Activated T-helper 2 cell treated with anti-CD3 and anti-CD28 coated beads, Interferon-gamma antibody, Interleukin-2, Interleukin-4, amounts not matched to agents 10 μg/mL and 5 μg/mL and 100 μg/mL, durations not matched to agents 14 hours and 24 hours and 36 hours (primary cell): ENCODE measurements at regions of chr5 and their contacts with region 1.

Region 1: GRCh38 chr5:67209142-67209771 is 12.7 kb upstream of the CD180 start:
- DNase-seq: peak; percentile 57
- H3K4me3 Mint-ChIP-seq: no peak overlapping the region
- H3K27ac Mint-ChIP-seq: peak overlapping the region; percentile 26
- H3K4me1 Mint-ChIP-seq: peaks cover 61% of the 10 kb centered on the region
- H3K27me3 Mint-ChIP-seq: no peaks in the 10 kb centered on the region

Region 2: GRCh38 chr5:66828548-66829357 is 380.5 kb before region 1 on chr5:
- intact Hi-C with region 1: loop called (anchors 5 kb)
- DNase-seq: peak; percentile 61
- H3K4me3 Mint-ChIP-seq: peak overlapping the region; percentile 88
- H3K27ac Mint-ChIP-seq: peak overlapping the region; percentile 86
- H3K4me1 Mint-ChIP-seq: peaks cover 41% of the 10 kb centered on the region
- H3K27me3 Mint-ChIP-seq: peaks cover 13% of the 10 kb centered on the region

Region 3: DNA sequence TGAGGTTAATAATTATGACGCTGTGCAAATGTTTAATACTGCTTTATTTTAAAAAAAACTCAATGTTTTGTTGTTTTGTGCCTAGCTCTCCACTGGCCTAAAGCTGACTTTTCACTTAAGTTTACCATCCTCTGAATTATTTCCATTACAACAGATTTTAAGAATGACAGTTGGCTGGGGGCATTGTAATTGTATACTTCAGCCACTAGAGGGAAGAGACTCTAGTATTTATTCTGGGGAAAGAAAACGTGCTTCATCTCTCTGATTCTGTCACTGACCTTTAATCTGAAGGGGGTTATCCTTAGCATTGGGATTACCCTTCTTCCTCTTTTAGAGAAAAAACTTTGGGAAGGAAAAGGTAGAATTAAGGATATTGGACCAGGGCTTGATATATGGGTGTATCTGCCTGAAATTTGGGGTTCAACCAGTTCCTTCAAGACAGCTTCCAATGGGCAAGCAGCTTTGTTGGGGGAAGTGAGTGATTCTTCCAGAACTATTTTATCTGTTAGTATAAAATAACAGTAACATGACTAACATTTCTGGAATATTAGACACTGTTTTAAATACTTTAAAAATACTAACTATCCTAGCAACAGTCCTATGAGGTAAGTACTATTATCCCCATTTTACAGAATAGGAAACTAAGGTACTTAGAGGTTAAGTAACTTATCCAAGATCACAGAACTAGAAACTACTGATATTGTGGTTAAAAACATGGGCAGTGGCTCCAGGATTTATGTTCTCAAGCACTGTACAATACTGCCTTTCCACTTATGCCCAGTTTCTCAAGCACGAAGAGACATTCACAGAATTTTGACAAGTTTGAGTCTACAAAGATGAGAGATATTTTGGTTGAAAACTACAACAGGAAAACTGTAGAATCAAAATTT is 221.1 kb before region 1 on chr5:
- intact Hi-C with region 1: loop called (anchors 2 kb)
- DNase-seq: no peak
- H3K4me3 Mint-ChIP-seq: no peak overlapping the region
- H3K27ac Mint-ChIP-seq: no peak overlapping the region
- H3K4me1 Mint-ChIP-seq: peaks cover 8% of the 10 kb centered on the region
- H3K27me3 Mint-ChIP-seq: peaks cover 19% of the 10 kb centered on the region

Region 4: DNA sequence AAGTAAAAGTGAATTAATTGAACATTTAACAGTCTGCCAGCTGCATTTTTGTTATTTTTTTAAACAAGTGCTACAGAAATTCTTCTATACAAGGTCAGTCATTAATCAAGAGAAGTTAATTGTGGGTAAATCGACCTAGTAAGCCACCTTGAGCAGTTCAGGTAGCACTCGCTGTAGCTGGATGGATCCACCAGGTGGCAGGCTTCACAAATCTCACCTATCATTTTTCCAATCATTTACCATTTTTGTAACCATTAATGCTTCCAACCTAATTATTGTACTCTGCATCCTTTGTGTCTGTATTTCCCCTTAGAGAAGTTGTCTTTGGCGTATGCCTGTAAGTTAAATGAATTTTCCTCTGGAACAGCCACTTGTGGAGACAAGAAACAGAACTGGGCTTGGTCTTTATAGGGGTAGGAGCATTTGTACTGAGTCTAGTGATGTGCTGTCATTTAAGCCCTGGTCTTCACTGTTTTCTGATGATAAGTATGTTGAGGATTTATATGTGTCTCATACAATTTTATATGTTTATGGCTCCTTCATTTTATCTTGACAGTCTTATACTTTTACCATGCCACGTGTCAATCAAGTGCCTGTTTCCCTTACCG is 52.2 kb before region 1 on chr5:
- intact Hi-C with region 1: loop called (anchors 1 kb)
- DNase-seq: no peak
- H3K4me3 Mint-ChIP-seq: no peak overlapping the region
- H3K27ac Mint-ChIP-seq: peak overlapping the region; percentile 40
- H3K4me1 Mint-ChIP-seq: peaks cover 38% of the 10 kb centered on the region
- H3K27me3 Mint-ChIP-seq: no peaks in the 10 kb centered on the region

Region 5: GRCh38 chr5:68252673-68253623 is 1043.7 kb after region 1 on chr5:
- intact Hi-C with region 1: loop called (anchors 10 kb)
- DNase-seq: no peak
- H3K4me3 Mint-ChIP-seq: no peak overlapping the region
- H3K27ac Mint-ChIP-seq: no peak overlapping the region
- H3K4me1 Mint-ChIP-seq: peaks cover 85% of the 10 kb centered on the region
- H3K27me3 Mint-ChIP-seq: no peaks in the 10 kb centered on the region